Cardiac septum (tissue), 1 donor: ENCODE measurements at regions of chr3 and their contacts with region 1.

Region 1: DNA sequence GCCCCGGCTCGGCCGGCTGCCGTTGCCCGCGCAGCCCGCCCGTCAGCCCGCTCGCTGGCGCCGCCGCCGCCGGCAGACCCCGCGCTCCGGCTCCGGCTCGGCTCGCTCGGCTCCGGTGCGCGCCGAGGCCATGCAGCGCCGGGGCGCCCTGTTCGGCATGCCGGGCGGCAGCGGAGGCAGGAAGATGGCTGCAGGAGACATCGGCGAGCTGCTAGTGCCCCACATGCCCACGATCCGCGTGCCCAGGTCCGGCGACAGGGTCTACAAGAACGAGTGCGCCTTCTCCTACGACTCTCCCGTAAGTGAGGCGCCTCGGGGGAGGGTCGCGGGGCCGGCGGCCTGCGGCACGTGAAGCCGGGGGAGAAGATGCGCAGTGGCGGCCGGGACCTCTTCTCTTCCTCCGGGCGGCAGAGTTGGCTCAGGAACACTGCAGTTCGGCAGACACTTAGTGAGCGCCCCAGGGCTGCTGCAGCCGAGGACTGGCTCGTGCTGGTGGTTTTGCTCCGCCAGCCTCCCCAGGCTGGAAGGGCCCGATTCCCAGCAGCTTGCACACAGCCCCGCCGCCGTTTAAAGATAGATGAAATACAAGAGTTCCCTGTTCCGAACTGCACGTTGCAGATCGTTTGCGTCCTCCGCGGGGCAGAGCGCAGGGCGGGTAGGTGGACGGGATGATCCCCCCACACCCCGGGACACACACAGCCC is 407 bp downstream of the USP13 start:
- DNase-seq: peak; percentile 88

Region 2: DNA sequence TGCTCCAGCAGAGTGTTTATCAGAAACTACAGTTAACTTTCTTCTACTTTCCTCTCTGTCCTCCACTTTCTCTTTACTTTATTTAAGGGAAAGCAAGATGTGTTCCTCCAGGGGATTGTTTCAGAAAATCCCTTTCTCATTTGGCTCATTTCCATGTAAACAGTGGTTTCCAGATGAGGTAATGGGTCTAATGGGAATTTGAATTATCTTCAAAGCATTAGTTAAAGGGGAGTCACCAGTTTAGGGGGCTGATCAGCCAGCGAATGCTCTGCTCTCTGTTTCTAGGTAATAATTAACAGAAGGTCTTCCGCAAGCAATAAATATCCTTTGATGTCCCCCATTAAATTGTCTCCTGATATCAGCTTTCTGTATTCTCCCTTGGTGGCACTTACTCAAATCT is 360.8 kb before region 1 on chr3:
- intact Hi-C with region 1: no loop called
- DNase-seq: no peak

Region 3: GRCh38 chr3:179446501-179446900 is 206.7 kb before region 1 on chr3:
- intact Hi-C with region 1: no loop called
- DNase-seq: no peak

Region 4: DNA sequence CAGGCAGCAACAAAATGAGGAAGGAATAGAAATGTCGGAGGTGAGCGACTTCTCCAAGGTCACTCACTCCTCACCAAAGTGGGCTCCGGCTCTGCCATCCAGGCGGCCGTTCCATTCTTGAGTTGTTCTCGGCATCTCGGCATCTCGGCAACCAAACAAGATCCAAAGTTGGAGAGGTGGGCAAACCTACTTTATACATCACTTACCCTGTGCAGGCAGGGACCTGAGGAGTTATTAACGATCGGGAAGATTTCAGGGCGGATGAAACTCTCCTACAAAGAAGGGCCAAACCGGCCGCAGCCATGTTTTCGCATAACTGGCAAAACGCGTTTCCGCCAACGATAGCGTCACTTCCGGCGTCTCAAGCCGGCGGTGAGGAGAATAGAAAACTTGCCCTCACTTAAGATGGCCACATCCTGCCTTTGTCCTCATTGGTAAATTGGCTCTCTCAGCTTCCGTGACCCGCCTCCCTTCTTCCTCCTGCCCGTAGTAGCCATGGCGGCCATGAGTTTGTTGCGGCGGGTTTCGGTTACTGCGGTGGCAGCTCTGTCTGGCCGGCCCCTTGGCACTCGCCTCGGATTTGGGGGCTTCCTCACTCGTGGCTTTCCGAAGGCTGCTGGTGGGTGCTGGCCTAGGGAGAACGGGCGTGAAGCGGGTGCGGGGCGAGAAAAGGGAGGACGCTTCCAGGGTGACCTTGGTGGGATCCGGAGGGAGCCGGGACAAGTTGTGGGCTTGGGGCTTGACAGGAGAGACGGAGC is 48.7 kb before region 1 on chr3 and contains the starts of genes MRPL47 and NDUFB5:
- intact Hi-C with region 1: loop called (anchors 5 kb)
- DNase-seq: peak; percentile 98
- total RNA-seq, gene MRPL47: 47.5 TPM
- total RNA-seq, gene NDUFB5: 258 TPM

Region 5: DNA sequence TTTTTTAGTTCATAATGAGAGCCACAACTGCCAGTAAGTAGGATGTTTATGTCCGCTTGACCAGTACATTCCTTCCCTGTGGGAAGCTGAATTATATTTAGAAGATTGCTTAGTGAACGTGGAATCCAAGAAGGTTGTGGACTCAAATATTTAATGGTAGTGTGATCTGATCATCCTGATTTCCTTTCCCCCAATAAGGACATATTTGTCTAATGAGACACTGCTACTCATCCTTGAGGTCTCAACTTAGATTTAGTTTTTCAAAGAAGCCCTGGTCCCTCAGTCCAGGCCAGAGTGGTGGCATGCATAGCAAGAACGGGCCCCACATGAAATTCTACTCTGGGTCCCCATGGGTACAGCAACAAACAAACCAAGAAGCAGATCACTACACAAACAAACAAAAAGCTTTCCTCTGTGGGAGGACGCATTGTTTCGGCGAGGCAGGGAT is 60.4 kb after region 1 on chr3:
- intact Hi-C with region 1: loop called (anchors 5 kb)
- DNase-seq: no peak

Region 6: GRCh38 chr3:179734497-179735281 is 81.4 kb after region 1 on chr3:
- intact Hi-C with region 1: loop called (anchors 5 kb)
- DNase-seq: no peak